MCF 10A (cell line): ENCODE measurements at regions of chr2 and their contacts with region 1.

Region 1: DNA sequence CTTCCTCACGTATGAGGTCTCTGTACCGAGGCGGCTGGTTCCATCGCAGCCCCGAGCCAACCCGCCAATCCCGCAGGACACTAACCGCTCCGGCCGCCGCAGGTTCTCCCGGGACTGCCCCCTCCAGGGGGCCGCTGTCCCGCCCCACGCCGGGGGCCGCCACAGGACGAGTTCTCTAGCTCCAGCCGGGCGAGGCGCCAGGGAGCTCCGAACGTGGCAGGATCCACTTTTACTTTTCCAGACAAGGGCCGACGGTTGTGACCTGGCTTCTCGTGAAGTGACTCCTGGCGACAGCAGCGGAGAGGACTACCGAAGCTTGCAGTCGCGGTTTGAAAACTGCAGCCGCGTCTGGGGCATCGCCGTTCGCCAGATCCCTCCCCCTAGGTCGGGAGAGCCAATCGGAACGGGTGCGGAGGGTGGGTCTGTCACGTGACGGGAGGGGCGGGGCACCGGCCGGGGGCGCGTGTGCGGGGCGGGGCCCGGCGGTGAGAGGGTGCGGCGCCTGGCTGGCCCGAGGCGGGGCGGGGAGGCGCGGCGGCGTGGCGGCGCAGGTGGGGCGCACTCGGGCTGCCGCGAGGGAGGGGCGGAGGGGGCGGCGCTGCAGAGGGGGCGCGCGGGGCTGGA is at the start of gene STK17B:
- DNase-seq: peak; percentile 96
- H3K4me3 Mint-ChIP-seq: peak within 1 kb of the TSS; percentile 99
- H3K27ac Mint-ChIP-seq: peak within 1 kb of the TSS; percentile 98
- H3K4me1 Mint-ChIP-seq: peaks cover 15% of the 10 kb centered on the region
- H3K27me3 Mint-ChIP-seq: no peaks in the 10 kb centered on the region
- CTCF ChIP-seq: no peak
- total RNA-seq, gene STK17B: 17.1 and 20.7 TPM in 2 replicates

Region 2: GRCh38 chr2:196076778-196077568 is 94.4 kb before region 1 on chr2:
- CTCF ChIA-PET with region 1: interaction called, 27 read pairs
- POLR2A ChIA-PET with region 1: interaction called, 18 read pairs
- intact Hi-C with region 1: loop called (anchors 1 kb)
- DNase-seq: no peak
- H3K4me3 Mint-ChIP-seq: no peak overlapping the region
- H3K27ac Mint-ChIP-seq: no peak overlapping the region
- H3K4me1 Mint-ChIP-seq: no peaks in the 10 kb centered on the region
- H3K27me3 Mint-ChIP-seq: no peaks in the 10 kb centered on the region
- CTCF ChIP-seq: no peak

Region 3: DNA sequence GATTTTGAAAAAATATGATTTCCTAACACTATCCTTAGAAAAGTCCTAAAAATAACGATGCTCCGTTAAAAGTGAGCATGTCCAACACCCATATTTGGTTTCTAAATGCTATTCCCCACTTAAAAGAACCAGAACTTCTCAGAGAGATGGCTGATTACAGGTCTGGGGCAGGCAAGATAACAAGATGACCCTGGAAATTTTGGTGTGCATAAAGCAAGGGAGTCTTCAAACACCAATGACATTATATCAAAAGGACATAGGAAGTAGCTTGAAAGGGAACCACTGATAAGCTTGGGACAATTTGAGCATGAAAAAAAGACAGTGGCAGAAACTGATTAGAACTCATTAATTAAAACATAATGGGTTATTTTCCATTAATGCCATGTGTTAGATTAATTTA is 17.9 kb before region 1 on chr2:
- CTCF ChIA-PET with region 1: interaction called, 4 read pairs
- POLR2A ChIA-PET with region 1: interaction called, 50 read pairs
- intact Hi-C with region 1: no loop called
- DNase-seq: no peak
- H3K4me3 Mint-ChIP-seq: no peak overlapping the region
- H3K27ac Mint-ChIP-seq: no peak overlapping the region
- H3K4me1 Mint-ChIP-seq: no peaks in the 10 kb centered on the region
- H3K27me3 Mint-ChIP-seq: no peaks in the 10 kb centered on the region
- CTCF ChIP-seq: no peak

Region 4: GRCh38 chr2:196205881-196206435 is 34.6 kb after region 1 on chr2:
- CTCF ChIA-PET with region 1: interaction called, 3 read pairs
- POLR2A ChIA-PET with region 1: interaction called, 32 read pairs
- intact Hi-C with region 1: no loop called
- DNase-seq: peak; percentile 90
- H3K4me3 Mint-ChIP-seq: peak overlapping the region; percentile 10
- H3K27ac Mint-ChIP-seq: peak overlapping the region; percentile 2
- H3K4me1 Mint-ChIP-seq: peaks cover 30% of the 10 kb centered on the region
- H3K27me3 Mint-ChIP-seq: no peaks in the 10 kb centered on the region
- CTCF ChIP-seq: no peak

Region 5: GRCh38 chr2:196277002-196277401 is 105.6 kb after region 1 on chr2:
- CTCF ChIA-PET with region 1: interaction called, 18 read pairs
- POLR2A ChIA-PET with region 1: interaction called, 27 read pairs
- intact Hi-C with region 1: loop called (anchors 1 kb)
- DNase-seq: no peak
- H3K4me3 Mint-ChIP-seq: no peak overlapping the region
- H3K27ac Mint-ChIP-seq: no peak overlapping the region
- H3K4me1 Mint-ChIP-seq: peaks cover 20% of the 10 kb centered on the region
- H3K27me3 Mint-ChIP-seq: no peaks in the 10 kb centered on the region
- CTCF ChIP-seq: peak; percentile 64